Dendritic cell treated with granulocyte-macrophage colony-stimulating factor and Interleukin-4, amounts not matched to agents 40 ng/mL and 50 ng/mL, for 4 days (primary cell): ENCODE measurements at regions of chr2 and their contacts with region 1.

Region 1: GRCh38 chr2:215624423-215624829 is 188.6 kb upstream of the FN1 start:
- H3K4me3 Mint-ChIP-seq: no peak overlapping the region
- H3K27ac Mint-ChIP-seq: no peak overlapping the region
- H3K4me1 Mint-ChIP-seq: peaks cover 19% of the 10 kb centered on the region
- H3K27me3 Mint-ChIP-seq: peaks cover 5% of the 10 kb centered on the region

Region 2: DNA sequence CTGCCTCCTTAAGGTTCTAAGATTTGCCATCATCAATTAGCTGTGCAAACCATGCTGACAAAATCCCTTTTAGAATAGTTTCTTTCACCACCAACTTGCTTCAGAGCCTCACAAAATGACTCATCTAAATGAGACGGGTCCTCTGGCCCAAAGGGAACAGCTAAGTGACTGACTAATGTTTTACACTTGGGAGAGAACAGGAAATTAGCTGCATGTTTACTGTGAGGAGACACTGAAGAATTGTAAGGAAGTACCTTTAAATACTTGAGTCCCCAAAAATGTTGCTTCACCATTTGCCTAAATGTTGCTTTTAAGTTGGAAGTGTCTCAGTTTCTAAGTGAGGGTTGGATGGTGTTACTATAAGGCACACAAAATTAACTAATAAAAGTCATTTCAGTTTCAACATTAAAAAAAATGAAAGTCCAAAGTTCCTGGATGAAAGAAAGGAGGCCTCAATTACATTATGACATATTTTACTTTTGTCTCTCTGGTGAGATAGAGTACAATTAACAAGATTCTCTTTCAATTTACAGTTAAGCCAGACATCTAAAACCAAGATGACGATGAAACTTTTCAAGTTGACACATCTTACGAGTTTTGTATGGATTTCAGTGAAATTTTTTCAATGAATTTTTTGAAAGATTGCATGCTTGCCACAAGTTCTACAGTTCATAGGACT is 40.6 kb after region 1 on chr2:
- intact Hi-C with region 1: no loop called
- H3K4me3 Mint-ChIP-seq: no peak overlapping the region
- H3K27ac Mint-ChIP-seq: peak overlapping the region; percentile 27
- H3K4me1 Mint-ChIP-seq: peaks cover 37% of the 10 kb centered on the region
- H3K27me3 Mint-ChIP-seq: peaks cover 51% of the 10 kb centered on the region

Region 3: GRCh38 chr2:215693193-215693998 is 69.0 kb after region 1 on chr2:
- intact Hi-C with region 1: loop called (anchors 10 kb)
- H3K4me3 Mint-ChIP-seq: no peak overlapping the region
- H3K27ac Mint-ChIP-seq: no peak overlapping the region
- H3K4me1 Mint-ChIP-seq: peaks cover 40% of the 10 kb centered on the region
- H3K27me3 Mint-ChIP-seq: peaks cover 23% of the 10 kb centered on the region